ENCODE measurements at regions of chr6 and their contacts with region 1.

Region 1: DNA sequence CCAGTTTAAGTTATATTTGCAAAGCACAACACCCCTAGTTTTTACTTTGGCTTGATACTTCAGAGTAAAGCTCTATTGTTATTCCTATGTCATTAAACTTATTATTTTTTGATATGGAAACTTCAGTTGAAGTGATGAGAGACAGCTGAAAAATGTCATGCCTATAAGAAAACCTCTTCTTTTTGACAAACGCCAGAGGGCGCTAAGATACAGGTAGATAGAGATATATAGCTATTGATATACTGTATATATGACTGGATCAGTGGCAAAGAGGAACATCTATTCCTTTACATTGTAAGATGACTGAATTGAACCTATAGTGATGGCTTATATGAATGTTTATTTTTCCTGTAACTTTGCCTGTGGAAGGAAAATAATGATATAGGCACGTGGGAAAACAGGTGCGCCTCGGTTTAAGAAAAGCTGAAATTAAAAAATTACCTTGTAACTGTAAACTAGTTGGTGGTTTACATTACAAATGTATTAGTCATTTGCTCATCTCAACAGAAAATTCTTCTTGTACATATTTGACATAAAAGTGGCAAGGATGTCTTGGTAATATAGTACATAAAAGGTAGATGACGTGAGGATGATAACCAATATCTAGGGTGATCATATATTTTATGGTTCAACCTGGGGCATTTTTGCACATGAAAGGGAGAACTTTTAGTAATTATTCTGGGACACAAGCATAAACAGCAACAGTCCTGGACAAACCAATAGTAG is 74.1 kb downstream of the LAMA4 start:
- DNase-seq: peak; percentile 84
- H3K4me3 ChIP-seq: no peak overlapping the region
- H3K27ac ChIP-seq: no peak overlapping the region
- H3K4me1 ChIP-seq: peaks cover 14% of the 10 kb centered on the region
- H3K27me3 ChIP-seq: no peaks in the 10 kb centered on the region

Region 2: GRCh38 chr6:111985202-111985731 is 195.0 kb before region 1 on chr6:
- in situ Hi-C with region 1: no loop called
- DNase-seq: peak; percentile 98
- H3K4me3 ChIP-seq: no peak overlapping the region
- H3K27ac ChIP-seq: peak overlapping the region; percentile 95
- H3K4me1 ChIP-seq: peaks cover 30% of the 10 kb centered on the region
- H3K27me3 ChIP-seq: no peaks in the 10 kb centered on the region

Region 3: DNA sequence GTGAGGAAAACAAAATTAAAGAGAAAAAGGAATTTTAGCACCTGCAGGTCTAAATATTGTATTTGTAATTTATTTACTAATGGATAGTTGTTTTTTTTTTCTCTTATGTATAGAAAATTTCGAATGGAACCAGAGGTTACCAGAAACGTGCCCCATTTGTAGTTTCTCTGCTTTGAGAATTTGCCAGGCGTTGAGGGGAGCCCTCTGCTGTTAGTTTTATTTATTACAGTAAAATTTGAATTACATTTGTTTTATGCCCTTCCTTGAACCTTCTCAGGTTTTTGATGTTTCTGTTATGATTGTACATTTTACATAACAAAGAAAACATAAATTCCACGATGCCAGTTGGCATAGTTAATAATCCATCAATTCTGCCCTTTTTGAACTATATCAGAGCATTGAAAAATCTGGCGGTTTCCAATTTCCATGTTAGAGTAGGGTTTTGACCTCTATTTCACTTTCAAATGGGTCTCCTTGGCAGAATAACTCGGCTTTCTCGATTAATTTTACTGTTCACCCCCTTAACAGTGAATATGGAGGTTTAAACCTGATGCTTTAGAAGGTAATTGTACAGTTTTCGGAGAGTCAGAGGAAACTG is 131.8 kb after region 1 on chr6:
- in situ Hi-C with region 1: loop called (anchors 25 kb)
- DNase-seq: peak; percentile 65
- H3K4me3 ChIP-seq: no peak overlapping the region; the same call in 1 of the 2 replicates
- H3K27ac ChIP-seq: no peak overlapping the region
- H3K4me1 ChIP-seq: peaks cover 34% of the 10 kb centered on the region
- H3K27me3 ChIP-seq: no peaks in the 10 kb centered on the region

Region 4: GRCh38 chr6:112372226-112372806 is 192.1 kb after region 1 on chr6:
- in situ Hi-C with region 1: loop called (anchors 10 kb)
- DNase-seq: peak; percentile 66
- H3K4me3 ChIP-seq: no peak overlapping the region
- H3K27ac ChIP-seq: no peak overlapping the region
- H3K4me1 ChIP-seq: no peaks in the 10 kb centered on the region
- H3K27me3 ChIP-seq: no peaks in the 10 kb centered on the region

Region 5: DNA sequence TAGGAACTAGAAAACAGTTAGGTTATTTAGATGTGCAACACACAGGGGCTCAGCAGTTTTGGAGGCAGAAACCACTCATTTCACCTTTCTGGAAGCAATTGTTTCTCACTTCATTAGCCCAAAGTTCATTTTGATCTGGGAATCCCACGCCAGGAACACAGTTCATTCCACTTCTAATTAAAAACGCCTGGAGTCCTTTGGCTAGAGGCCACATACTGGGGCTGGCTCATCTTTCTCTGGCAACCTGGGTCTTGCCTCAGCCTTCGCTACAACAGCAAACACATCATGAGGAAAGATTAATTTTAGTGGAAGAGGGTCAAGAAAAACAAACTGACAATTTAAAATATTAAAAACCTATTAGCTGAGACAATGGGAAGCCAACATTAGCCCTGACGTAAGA is 236.6 kb after region 1 on chr6:
- in situ Hi-C with region 1: no loop called
- DNase-seq: peak; percentile 77
- H3K4me3 ChIP-seq: no peak overlapping the region
- H3K27ac ChIP-seq: peak overlapping the region; percentile 57
- H3K4me1 ChIP-seq: peaks cover 13% of the 10 kb centered on the region
- H3K27me3 ChIP-seq: no peaks in the 10 kb centered on the region; the same call in 1 of the 2 replicates

Measured in GM23248 (cell line).